ENCODE measurements at regions of chrX and their contacts with region 1.

Region 1: DNA sequence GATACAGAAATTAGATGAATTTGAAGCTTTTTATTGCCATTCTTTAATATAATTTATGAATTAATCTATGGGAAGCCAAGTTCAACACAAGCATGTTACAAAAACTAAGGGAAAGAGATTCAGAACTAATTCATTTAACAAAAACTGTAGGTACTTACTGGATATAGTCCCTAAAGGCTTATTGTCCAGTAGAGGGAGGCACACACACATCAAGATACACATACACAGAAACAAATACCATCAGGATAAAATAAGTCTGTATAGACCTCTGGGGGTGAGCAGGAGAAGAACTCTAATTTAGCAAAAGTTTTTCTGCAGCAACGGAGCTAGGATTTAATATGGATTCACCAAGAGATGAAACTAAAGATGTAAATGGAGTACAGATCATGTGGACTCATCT is 83.0 kb upstream of the IL13RA1 start:
- DNase-seq: no peak
- ATAC-seq: peak; percentile 76
- H3K4me3 ChIP-seq: no peak overlapping the region
- H3K27ac ChIP-seq: no peak overlapping the region
- H3K4me1 ChIP-seq: no peaks in the 10 kb centered on the region
- H3K27me3 ChIP-seq: no peaks in the 10 kb centered on the region
- CTCF ChIP-seq: peak in 2 of 3 experiments; percentile 31 to 45; a peak in 3 of 6 replicates
- EP300 ChIP-seq: no peak
- POLR2A ChIP-seq: no peak
- RAD21 ChIP-seq: peak; percentile 43; the same call in 1 of the 2 replicates

Region 2: DNA sequence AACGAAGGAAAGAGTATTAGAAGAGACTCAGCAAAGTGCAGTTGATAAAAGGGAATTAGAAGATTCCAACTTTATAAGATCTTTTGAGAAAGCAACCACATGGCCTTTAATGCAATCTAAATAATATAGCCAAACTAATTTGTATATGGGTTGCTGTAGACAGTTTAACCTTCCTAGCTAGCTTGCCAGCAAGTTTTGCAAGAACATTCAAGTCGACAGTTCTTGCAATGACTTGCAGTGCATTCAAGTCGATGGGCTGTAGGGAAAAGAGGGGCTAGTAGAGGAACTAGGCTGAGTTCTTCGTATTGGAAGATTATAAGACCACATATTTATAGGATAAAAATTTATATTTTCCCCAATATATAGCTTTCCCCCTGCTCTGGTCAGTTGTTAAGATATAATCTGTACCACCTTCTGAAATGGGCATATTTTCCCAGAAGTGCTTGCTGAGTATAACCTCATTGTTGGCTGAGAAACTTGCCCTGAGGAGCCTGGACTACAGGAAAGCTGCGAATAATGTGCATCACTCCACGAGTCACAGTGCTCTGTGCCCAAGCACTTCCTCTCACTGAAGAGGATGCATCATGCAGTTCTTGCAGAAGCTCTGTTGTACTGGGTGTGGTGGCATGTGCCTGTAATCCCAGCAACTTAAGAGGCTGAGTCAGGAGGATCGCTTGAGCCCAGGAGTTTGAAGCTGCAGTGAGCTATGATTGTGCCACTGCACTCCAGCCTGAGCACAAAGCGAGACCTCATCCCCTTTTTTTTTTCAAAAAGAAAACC is 92.1 kb before region 1 on chrX:
- CTCF ChIA-PET with region 1: no interaction called
- POLR2A ChIA-PET with region 1: no interaction called
- RAD21 ChIA-PET with region 1: no interaction called
- SMC1A ChIA-PET with region 1: no interaction called
- in situ Hi-C with region 1: no loop called
- intact Hi-C with region 1: no loop called
- DNase-seq: no peak
- ATAC-seq: no peak
- H3K4me3 ChIP-seq: no peak overlapping the region
- H3K27ac ChIP-seq: no peak overlapping the region
- H3K4me1 ChIP-seq: no peaks in the 10 kb centered on the region
- H3K27me3 ChIP-seq: no peaks in the 10 kb centered on the region
- CTCF ChIP-seq: no peak
- EP300 ChIP-seq: no peak
- POLR2A ChIP-seq: no peak
- RAD21 ChIP-seq: no peak

Region 3: GRCh38 chrX:118761939-118762707 is 117.7 kb after region 1 on chrX:
- CTCF ChIA-PET with region 1: interaction called, 11 read pairs
- POLR2A ChIA-PET with region 1: no interaction called
- RAD21 ChIA-PET with region 1: no interaction called
- SMC1A ChIA-PET with region 1: interaction called, 4 read pairs
- in situ Hi-C with region 1: no loop called
- intact Hi-C with region 1: no loop called
- DNase-seq: no peak
- ATAC-seq: peak; percentile 52; the same call in 2 of the 3 replicates
- H3K4me3 ChIP-seq: no peak overlapping the region
- H3K27ac ChIP-seq: no peak overlapping the region
- H3K4me1 ChIP-seq: no peaks in the 10 kb centered on the region
- H3K27me3 ChIP-seq: no peaks in the 10 kb centered on the region
- CTCF ChIP-seq: peak in 2 of 3 experiments; percentile 9 to 32; a peak in 2 of 6 replicates
- EP300 ChIP-seq: no peak
- POLR2A ChIP-seq: no peak
- RAD21 ChIP-seq: peak; percentile 41

Measured in GM12878 (cell line).